CD4-positive, alpha-beta T cell (primary cell): ENCODE measurements at regions of chr16 and their contacts with region 1.

Region 1: DNA sequence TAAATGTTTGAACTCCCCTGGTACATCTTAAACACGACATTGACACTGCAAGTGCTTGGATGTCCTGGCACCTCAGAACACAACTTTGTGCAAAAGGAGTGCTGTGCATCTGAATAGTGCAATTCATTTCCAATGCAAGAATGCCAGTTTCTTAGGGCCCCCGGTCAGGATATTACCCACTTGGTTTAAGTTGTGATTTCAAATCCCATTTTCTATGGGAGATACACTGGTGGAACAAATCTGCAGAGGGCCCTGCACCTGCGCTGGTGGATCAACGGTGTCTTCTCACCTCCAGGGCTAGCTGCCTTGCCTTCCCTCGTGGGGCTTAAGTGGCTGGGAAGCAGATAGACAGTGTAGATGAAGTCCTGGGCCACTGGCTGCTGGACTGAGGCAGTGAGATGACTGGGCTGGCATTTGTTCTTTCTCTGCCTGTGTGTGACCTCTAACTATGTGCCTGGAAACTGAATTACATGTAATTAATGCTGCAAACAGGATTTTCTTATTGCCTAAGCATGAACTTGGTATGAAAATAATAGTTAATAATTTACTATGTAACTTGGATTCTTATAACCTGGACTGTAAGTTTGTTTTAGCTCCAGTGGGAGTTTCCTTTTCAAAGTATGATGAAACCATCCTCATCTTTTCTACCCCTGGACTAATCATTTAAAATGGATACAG is 20.9 kb downstream of the HAPSTR1 start:
- DNase-seq: no peak
- ATAC-seq: peak; percentile 9
- H3K4me3 ChIP-seq: no peak overlapping the region
- H3K4me3 Mint-ChIP-seq: peak overlapping the region; percentile 39
- H3K27ac ChIP-seq: peak overlapping the region in 1 of 2 donors; percentile 27
- H3K27ac Mint-ChIP-seq: peak overlapping the region; percentile 73
- H3K4me1 ChIP-seq: peaks cover 40% of the 10 kb centered on the region
- H3K4me1 Mint-ChIP-seq: peaks cover 88% of the 10 kb centered on the region
- H3K27me3 ChIP-seq: no peaks in the 10 kb centered on the region
- H3K27me3 Mint-ChIP-seq: no peaks in the 10 kb centered on the region
- CTCF ChIP-seq: no peak

Region 2: GRCh38 chr16:9099131-9099625 is 13.1 kb before region 1 on chr16:
- CTCF ChIA-PET with region 1: interaction called, 3 read pairs
- POLR2A ChIA-PET with region 1: interaction called, 4 read pairs
- intact Hi-C with region 1: loop called in 1 of 2 experiments (anchors 2 kb)
- DNase-seq: peak in 2 of 14 experiments; percentile 38 to 49
- ATAC-seq: no peak
- H3K4me3 ChIP-seq: peak overlapping the region; percentile 4
- H3K4me3 Mint-ChIP-seq: peak overlapping the region; percentile 80
- H3K27ac ChIP-seq: no peak overlapping the region
- H3K27ac Mint-ChIP-seq: peak overlapping the region; percentile 63
- H3K4me1 ChIP-seq: peaks cover 66% of the 10 kb centered on the region
- H3K4me1 Mint-ChIP-seq: peaks cover 95% of the 10 kb centered on the region
- H3K27me3 ChIP-seq: no peaks in the 10 kb centered on the region
- H3K27me3 Mint-ChIP-seq: no peaks in the 10 kb centered on the region
- CTCF ChIP-seq: no peak